HepG2 (cell line): ENCODE measurements at regions of chr2 and their contacts with region 1.

Region 1: DNA sequence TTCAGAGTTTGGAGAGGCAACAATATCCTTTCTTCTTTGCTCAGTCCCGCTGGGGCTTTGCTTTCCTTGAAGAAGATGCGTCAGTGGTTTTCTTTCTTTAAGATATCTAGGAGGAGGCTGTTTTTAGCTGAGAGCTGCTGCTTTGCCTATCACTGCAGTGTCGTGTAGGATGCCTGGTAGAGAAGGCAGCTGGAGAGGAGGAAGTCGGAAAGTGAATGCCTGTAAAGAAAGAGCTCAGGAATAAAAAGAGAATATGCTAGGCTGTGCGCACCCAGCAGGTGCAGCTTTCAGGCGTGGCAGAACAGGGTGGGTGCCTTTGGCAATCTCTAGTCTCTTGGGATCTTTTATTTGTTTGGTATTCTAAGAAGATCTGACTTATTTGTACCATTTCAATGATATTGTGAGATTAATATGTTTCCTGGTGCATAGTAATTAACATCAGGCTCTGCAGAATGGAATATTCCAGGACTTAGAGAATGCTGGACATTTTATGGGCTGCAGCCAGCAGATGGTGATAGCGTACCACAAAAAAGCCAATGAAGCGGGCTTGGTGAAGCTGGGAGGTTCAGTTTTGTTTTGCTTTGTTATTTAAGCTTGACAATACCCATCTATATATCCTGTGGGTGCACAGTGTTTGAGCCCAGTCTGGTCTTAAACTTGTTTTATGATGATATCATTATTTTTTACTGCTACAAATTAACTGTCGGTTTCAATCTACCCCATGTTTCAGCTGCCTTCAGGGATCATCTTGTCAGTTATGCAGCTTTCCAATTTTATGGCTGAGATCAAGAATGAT is 34.9 kb downstream of the CAVIN2 start:
- DNase-seq: peak; percentile 68
- ATAC-seq: peak; percentile 94
- H3K4me3 ChIP-seq: no peak overlapping the region
- H3K27ac ChIP-seq: no peak overlapping the region
- H3K4me1 ChIP-seq: 0 out of 2 replicates have a peak, but pooled peaks cover 11% of the 10 kb centered on the region
- H3K27me3 ChIP-seq: no peaks in the 10 kb centered on the region
- CTCF ChIP-seq: peak; percentile 91
- EP300 ChIP-seq: no peak
- POLR2A ChIP-seq: no peak
- RAD21 ChIP-seq: peak; percentile 95

Region 2: DNA sequence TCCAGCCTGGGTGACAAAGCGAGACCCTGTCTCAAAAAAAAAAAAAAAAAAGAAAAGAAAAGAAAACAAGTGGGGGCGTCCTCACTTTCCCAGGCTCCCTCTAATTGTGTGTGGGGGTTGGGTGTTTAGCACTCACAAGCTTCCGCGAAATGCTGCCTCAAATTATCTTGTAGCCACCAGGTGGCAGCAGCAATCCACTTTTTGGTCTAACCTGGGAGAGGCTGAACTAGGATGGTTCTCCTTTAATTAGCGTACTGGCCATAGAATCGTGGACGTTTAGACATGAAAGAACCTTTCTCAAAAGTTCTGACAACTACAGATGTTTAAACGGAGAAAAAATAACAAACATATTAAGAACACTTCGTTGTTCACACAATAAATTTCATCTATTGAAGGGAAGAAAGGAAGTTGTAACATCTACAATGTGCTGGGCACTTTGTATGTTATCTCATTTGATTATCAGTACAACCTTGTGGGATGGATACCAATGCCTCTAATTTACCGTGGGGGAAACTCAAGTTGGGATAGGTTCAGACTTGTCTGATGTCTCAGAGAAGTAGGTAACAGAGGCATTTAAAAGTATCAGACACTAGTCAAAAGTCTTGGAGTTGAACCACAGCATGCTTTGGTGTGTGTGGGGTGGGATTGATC is 256.8 kb before region 1 on chr2:
- CTCF ChIA-PET with region 1: interaction called, 9 read pairs
- POLR2A ChIA-PET with region 1: no interaction called
- in situ Hi-C with region 1: no loop called
- intact Hi-C with region 1: loop called (anchors 1 kb)
- DNase-seq: peak; percentile 73
- ATAC-seq: peak; percentile 97
- H3K4me3 ChIP-seq: no peak overlapping the region
- H3K27ac ChIP-seq: no peak overlapping the region
- H3K4me1 ChIP-seq: no peaks in the 10 kb centered on the region
- H3K27me3 ChIP-seq: peaks cover 0 to 7% of the 10 kb centered on the region in 2 experiments; a peak in 2 of 5 replicates
- CTCF ChIP-seq: peak; percentile 89
- EP300 ChIP-seq: no peak
- POLR2A ChIP-seq: no peak
- RAD21 ChIP-seq: peak; percentile 79

Region 3: GRCh38 chr2:191878576-191879279 is 66.7 kb after region 1 on chr2:
- CTCF ChIA-PET with region 1: no interaction called
- POLR2A ChIA-PET with region 1: no interaction called
- in situ Hi-C with region 1: no loop called
- intact Hi-C with region 1: no loop called
- DNase-seq: no peak
- ATAC-seq: no peak
- H3K4me3 ChIP-seq: no peak overlapping the region
- H3K27ac ChIP-seq: no peak overlapping the region
- H3K4me1 ChIP-seq: peaks cover 43% of the 10 kb centered on the region
- H3K27me3 ChIP-seq: no peaks in the 10 kb centered on the region
- CTCF ChIP-seq: no peak
- EP300 ChIP-seq: no peak
- POLR2A ChIP-seq: no peak
- RAD21 ChIP-seq: no peak

Region 4: GRCh38 chr2:191907545-191907944 is 95.5 kb after region 1 on chr2:
- CTCF ChIA-PET with region 1: no interaction called
- POLR2A ChIA-PET with region 1: no interaction called
- in situ Hi-C with region 1: no loop called
- intact Hi-C with region 1: loop called (anchors 1 kb)
- DNase-seq: peak; percentile 34
- ATAC-seq: peak; percentile 92
- H3K4me3 ChIP-seq: no peak overlapping the region
- H3K27ac ChIP-seq: no peak overlapping the region
- H3K4me1 ChIP-seq: no peaks in the 10 kb centered on the region; the same call in 1 of the 2 replicates
- H3K27me3 ChIP-seq: no peaks in the 10 kb centered on the region
- CTCF ChIP-seq: peak; percentile 47; the same call in 1 of the 2 replicates
- EP300 ChIP-seq: no peak
- POLR2A ChIP-seq: no peak
- RAD21 ChIP-seq: no peak

Region 5: DNA sequence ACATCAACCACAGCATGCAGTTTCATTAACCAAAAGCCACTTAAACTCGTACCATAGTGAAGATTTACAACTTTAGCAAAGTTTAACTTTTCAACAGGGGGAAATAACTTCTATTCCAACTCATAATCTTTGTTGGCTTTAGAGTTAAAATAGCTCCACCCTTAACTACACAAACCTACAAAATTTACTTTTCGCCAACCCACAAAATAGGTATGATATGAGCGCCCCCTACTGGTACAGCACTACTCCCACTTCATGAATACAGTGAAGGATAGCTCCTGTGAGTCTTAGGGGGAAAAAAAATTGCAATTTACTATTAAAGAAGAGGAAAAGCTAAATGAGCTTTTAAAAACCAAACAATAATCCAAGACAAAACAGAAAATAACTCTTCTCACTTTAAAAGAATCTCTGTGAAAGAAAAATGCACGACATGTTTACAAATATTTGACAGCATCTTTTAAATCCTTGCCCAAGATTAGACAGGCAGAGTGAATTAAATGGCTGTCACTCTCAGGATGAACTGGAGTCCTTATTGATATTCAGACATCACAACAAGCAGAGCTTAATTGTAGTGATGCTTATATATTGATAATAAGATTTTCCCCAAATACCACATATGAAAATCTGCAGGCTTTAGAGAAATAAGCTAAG is 350.5 kb after region 1 on chr2:
- CTCF ChIA-PET with region 1: interaction called, 142 read pairs
- POLR2A ChIA-PET with region 1: interaction called, 9 read pairs
- in situ Hi-C with region 1: loop called (anchors 5 kb)
- intact Hi-C with region 1: loop called (anchors 1 kb)
- DNase-seq: peak; percentile 64
- ATAC-seq: peak; percentile 96
- H3K4me3 ChIP-seq: no peak overlapping the region
- H3K27ac ChIP-seq: no peak overlapping the region
- H3K4me1 ChIP-seq: no peaks in the 10 kb centered on the region
- H3K27me3 ChIP-seq: no peaks in the 10 kb centered on the region
- CTCF ChIP-seq: peak; percentile 89
- EP300 ChIP-seq: no peak
- POLR2A ChIP-seq: no peak
- RAD21 ChIP-seq: peak; percentile 93

Region 6: GRCh38 chr2:192277494-192278109 is 465.6 kb after region 1 on chr2:
- CTCF ChIA-PET with region 1: no interaction called
- POLR2A ChIA-PET with region 1: no interaction called
- in situ Hi-C with region 1: no loop called
- intact Hi-C with region 1: no loop called
- DNase-seq: no peak
- ATAC-seq: no peak
- H3K4me3 ChIP-seq: no peak overlapping the region
- H3K27ac ChIP-seq: no peak overlapping the region
- H3K4me1 ChIP-seq: no peaks in the 10 kb centered on the region
- H3K27me3 ChIP-seq: 0 out of 5 replicates have a peak, but pooled peaks cover 0 to 4% of the 10 kb centered on the region in 2 experiments
- CTCF ChIP-seq: no peak
- EP300 ChIP-seq: no peak
- POLR2A ChIP-seq: no peak
- RAD21 ChIP-seq: no peak

Region 7: DNA sequence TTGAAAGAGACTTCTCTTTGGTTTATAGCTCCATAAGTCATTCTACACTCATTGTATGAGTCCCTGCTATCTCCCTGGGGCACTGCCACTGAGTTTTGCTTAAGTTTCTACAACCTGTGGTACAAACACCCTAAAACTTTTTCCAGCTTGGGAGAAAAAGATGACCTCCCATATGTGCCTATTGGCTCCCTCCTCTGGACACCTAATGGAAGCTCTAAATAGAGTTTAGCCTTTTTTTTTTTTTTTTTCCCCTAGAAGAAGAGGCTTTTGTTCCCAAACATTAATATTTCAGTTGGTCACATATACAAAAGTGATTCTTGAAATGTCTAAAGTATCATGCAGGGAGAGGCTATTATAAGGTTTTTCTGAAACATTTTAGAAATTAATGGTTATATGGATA is 929.9 kb after region 1 on chr2:
- CTCF ChIA-PET with region 1: no interaction called
- POLR2A ChIA-PET with region 1: no interaction called
- in situ Hi-C with region 1: no loop called
- intact Hi-C with region 1: loop called (anchors 5 kb)
- DNase-seq: peak; percentile 29
- ATAC-seq: peak; percentile 66
- H3K4me3 ChIP-seq: no peak overlapping the region
- H3K27ac ChIP-seq: no peak overlapping the region
- H3K4me1 ChIP-seq: no peaks in the 10 kb centered on the region
- H3K27me3 ChIP-seq: no peaks in the 10 kb centered on the region
- CTCF ChIP-seq: peak; percentile 33
- EP300 ChIP-seq: no peak
- POLR2A ChIP-seq: no peak
- RAD21 ChIP-seq: no peak